ENCODE measurements at regions of chr1 and their contacts with region 1.

Region 1: GRCh38 chr1:203340112-203340804 is 10.7 kb downstream of the FMOD start:
- DNase-seq: peak; percentile 58 to 78 (median 78)
- H3K4me3 ChIP-seq: no peak overlapping the region
- H3K4me3 Mint-ChIP-seq: peak overlapping the region in 1 of 2 donors; percentile 78
- H3K27ac ChIP-seq: no peak overlapping the region
- H3K27ac Mint-ChIP-seq: no peak overlapping the region
- H3K4me1 ChIP-seq: no peaks in the 10 kb centered on the region
- H3K4me1 Mint-ChIP-seq: peaks cover 17% of the 10 kb centered on the region
- H3K27me3 ChIP-seq: peaks cover 19 to 29% of the 10 kb centered on the region in 2 donors
- H3K27me3 Mint-ChIP-seq: peaks cover 21 to 31% (median 25%) of the 10 kb centered on the region in 3 donors
- CTCF ChIP-seq: peak; percentile 89

Region 2: DNA sequence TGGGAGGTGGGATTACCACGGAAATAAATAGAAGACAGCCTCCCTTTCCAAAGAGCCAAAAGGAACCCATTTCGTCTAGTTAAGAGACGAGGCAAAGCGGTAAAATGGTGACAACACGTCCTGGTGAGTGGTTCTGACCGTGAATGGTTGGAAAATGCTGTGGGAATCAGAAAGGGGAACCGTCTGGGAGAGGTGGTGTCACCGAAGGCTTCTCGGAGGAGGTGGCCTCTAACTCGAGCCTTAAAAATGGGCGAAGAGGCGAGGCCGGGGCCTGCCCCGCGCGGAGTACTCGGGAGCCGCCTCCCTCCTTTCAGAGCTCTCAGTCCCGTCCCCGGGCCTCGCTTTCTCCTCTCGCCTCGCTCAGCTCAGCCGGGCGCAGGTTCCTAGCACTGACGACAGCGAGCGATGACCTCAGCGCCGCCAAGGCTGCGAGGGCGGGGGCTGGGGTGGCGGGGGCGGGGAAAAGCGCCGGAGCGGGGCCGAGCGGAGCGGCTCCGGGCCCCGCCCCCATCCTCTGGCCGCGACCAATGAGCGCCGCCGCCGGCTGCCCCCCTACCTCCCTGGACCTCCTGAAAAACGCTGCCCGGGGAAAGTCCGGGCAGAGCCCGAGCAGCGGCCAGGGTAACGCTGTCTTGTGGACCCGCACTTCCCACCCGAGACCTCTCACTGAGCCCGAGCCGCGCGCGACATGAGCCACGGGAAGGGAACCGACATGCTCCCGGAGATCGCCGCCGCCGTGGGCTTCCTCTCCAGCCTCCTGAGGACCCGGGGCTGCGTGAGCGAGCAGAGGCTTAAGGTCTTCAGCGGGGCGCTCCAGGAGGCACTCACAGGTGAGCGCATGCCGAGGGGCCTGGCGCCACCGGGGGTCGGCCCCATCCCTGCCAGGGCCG is 35.1 kb before region 1 on chr1 and contains the start of gene BTG2:
- intact Hi-C with region 1: loop called in 1 of 2 experiments (anchors 5 kb)
- DNase-seq: peak; percentile 92 to 96 (median 93)
- H3K4me3 ChIP-seq: peak within 1 kb of the TSS; percentile 81 to 99 (median 97)
- H3K4me3 Mint-ChIP-seq: peak within 1 kb of the TSS; percentile 93 to 100
- H3K27ac ChIP-seq: peak within 1 kb of the TSS; percentile 98 to 100
- H3K27ac Mint-ChIP-seq: peak within 1 kb of the TSS; percentile 97 to 99 (median 98)
- H3K4me1 ChIP-seq: peaks cover 54 to 68% of the 10 kb centered on the region in 2 donors
- H3K4me1 Mint-ChIP-seq: peaks cover 69% of the 10 kb centered on the region
- H3K27me3 ChIP-seq: no peaks in the 10 kb centered on the region
- H3K27me3 Mint-ChIP-seq: peaks cover 0 to 3% (median 2%) of the 10 kb centered on the region in 3 donors
- CTCF ChIP-seq: no peak
- polyA plus RNA-seq, gene BTG2: 293 to 539 (median 483) TPM

Region 3: DNA sequence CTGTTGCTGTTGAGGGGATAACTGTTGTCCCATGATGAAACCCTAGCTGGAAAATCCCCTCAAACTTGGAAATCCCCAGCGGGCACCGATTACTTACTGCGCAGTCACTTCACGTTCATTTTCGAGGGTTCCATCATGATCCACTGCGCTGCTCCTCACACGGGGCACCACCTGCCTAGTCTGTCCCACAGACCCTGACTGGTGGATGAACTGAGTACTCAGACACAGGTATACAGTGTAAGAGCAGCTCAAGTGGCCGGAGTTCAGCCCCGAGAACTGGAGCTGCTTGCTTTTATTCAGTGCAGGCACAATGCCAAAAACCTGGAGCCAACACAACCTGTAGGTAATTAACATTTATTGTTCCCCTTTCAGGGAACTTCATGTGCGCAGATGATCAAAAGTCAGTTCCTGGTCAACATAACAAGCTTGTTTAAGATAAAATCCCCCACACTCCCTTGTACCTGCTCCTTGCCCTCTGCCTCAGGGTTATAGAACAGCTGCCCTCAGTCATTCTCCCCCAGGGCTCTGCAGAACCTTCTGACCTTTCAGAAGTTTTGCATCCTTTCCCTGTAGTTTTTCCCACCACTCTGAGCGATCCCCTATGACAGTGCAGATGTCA is 88.8 kb after region 1 on chr1:
- intact Hi-C with region 1: loop called in 1 of 2 experiments (anchors 5 kb)
- DNase-seq: no peak
- H3K4me3 ChIP-seq: no peak overlapping the region
- H3K4me3 Mint-ChIP-seq: no peak overlapping the region
- H3K27ac ChIP-seq: no peak overlapping the region
- H3K27ac Mint-ChIP-seq: peak overlapping the region in 1 of 7 donors; percentile 38
- H3K4me1 ChIP-seq: peaks cover 16 to 20% of the 10 kb centered on the region in 2 donors
- H3K4me1 Mint-ChIP-seq: peaks cover 27% of the 10 kb centered on the region
- H3K27me3 ChIP-seq: peaks cover 0 to 10% of the 10 kb centered on the region in 2 donors
- H3K27me3 Mint-ChIP-seq: peaks cover 12 to 29% (median 19%) of the 10 kb centered on the region in 3 donors
- CTCF ChIP-seq: no peak

Region 4: GRCh38 chr1:203486618-203487370 is 146.5 kb after region 1 on chr1:
- intact Hi-C with region 1: loop called (anchors 1 to 2 kb)
- DNase-seq: no peak
- H3K4me3 ChIP-seq: no peak overlapping the region
- H3K4me3 Mint-ChIP-seq: no peak overlapping the region
- H3K27ac ChIP-seq: no peak overlapping the region
- H3K27ac Mint-ChIP-seq: peak overlapping the region in 4 of 7 donors; percentile 48 to 85 (median 59)
- H3K4me1 ChIP-seq: peaks cover 16 to 26% of the 10 kb centered on the region in 2 donors
- H3K4me1 Mint-ChIP-seq: peaks cover 24% of the 10 kb centered on the region
- H3K27me3 ChIP-seq: no peaks in the 10 kb centered on the region
- H3K27me3 Mint-ChIP-seq: peaks cover 0 to 11% (median 7%) of the 10 kb centered on the region in 3 donors
- CTCF ChIP-seq: no peak

Region 5: DNA sequence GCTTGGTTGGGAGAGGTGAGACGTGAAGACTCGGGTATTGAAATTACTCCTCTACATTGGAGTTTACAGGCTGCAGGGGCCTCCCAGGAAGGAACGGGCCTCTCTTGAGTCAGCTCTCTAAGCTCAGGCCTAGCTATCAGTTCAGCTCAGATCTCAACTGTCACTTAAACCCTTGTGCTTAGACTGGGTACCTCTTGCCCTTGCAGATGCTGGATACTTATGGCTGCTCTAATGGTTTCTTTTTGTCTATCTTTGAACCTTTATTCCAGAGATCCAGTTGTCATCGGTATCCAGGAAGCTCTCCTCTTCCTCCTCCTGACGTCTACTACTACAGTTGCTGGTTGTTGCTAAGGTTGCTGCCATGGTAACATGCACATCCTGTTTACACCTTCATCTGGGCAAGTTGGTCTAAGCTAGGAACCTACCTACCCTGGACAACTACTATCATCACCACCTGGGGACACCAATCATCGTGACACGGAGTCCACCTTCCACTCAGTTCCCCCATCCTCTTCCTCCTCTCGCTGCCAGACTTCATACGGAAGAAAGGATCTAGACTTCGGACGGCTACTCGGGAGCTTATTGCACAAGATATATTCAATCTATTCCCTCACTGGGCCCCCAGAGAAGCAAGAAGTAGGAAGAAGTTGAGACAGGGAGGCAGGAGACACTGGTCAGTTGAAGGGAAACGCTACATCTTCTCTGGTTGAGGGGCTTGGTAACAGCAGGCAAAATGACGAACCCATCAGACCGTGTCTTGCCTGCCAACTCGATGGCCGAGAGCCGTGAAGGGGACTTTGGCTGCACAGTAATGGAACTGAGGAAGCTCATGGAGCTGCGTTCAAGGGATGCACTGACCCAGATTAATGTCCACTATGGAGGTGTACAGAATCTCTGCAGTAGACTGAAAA is 342.5 kb after region 1 on chr1:
- intact Hi-C with region 1: loop called in 1 of 2 experiments (anchors 10 kb)
- DNase-seq: peak in 2 of 3 donors; percentile 7 to 15
- H3K4me3 ChIP-seq: no peak overlapping the region
- H3K4me3 Mint-ChIP-seq: no peak overlapping the region
- H3K27ac ChIP-seq: peak overlapping the region in 1 of 2 donors; percentile 59
- H3K27ac Mint-ChIP-seq: peak overlapping the region in 6 of 7 donors; percentile 31 to 85 (median 54)
- H3K4me1 ChIP-seq: no peaks in the 10 kb centered on the region
- H3K4me1 Mint-ChIP-seq: peaks cover 8% of the 10 kb centered on the region
- H3K27me3 ChIP-seq: no peaks in the 10 kb centered on the region
- H3K27me3 Mint-ChIP-seq: peaks cover 0 to 1% (median 0%) of the 10 kb centered on the region in 3 donors
- CTCF ChIP-seq: no peak